Right cardiac atrium (tissue), 5 donors: ENCODE measurements at regions of chrX and their contacts with region 1.

Region 1: DNA sequence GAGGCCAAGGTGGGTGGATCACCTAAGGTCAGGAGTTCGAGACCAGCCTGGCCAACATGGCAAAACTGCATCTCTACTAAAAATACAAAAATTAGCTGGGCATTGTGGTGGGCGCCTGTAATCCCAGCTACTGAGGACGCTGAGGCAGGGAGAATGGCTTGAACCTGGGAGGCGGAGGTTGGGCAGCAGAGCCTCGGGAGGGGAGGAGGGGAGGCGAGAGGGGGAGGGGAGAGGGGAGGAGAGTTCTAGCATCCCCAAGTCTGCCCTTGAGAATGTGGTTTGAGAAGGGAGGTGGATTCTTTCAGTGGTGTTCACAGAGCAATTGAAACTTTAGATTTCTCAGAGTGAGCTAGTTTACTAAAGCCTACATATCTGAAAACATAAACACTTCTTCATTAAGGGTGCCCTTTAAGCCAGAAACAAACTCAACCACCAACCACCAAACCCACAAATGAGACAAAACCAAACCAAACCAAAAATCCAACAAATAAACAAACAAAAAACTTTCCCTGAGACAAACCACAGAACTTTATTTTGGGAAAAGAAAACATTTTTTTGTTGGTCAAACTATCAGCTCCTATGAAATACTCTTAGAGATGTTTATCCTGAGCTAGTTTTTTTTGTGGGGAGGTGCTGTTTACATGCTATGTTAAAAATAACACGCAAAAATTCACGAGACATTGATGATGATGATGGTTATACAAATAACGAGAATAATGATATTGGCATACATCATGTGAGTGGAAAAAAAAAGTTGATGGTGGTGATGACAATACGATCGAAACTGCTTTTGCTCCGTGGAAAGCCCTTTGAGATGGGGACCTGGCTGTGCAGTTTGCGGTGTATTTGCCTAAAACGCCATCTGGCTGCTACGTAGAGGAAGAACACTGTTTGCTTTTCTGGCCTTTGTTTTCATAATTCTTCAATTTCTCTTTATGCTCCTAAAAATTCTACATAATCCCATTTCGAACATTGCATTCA is 98.2 kb upstream of the PRKX start:
- DNase-seq: peak in 2 of 3 donors; percentile 15 to 46
- ATAC-seq: no peak
- H3K4me3 ChIP-seq: no peak overlapping the region
- H3K27ac ChIP-seq: no peak overlapping the region
- H3K4me1 ChIP-seq: no peaks in the 10 kb centered on the region
- H3K27me3 ChIP-seq: no peaks in the 10 kb centered on the region

Region 2: DNA sequence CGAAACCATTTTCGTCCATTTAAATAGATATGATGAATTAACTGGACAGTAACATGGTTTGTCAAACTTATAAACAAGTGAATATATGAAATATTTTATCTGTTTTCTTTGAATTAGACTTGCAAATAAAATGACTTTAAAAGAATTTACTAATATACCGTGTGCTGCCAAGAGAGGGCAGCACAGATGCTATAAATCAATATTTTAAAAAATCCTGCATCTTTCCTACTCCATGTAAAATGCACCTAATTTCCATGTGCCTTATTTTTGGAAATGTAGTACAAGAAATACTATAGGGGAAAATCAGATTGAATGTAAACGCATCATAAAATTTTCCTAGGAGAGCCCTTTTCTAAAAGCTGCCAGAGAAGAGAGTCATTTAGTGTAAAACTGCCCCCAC is 160.3 kb before region 1 on chrX:
- intact Hi-C with region 1: loop called (anchors 5 to 10 kb)
- DNase-seq: no peak
- ATAC-seq: no peak
- H3K4me3 ChIP-seq: no peak overlapping the region
- H3K27ac ChIP-seq: no peak overlapping the region
- H3K4me1 ChIP-seq: no peaks in the 10 kb centered on the region
- H3K27me3 ChIP-seq: no peaks in the 10 kb centered on the region

Region 3: GRCh38 chrX:3697701-3698279 is 113.8 kb before region 1 on chrX:
- intact Hi-C with region 1: no loop called
- DNase-seq: peak in 2 of 3 donors; percentile 35 to 62
- ATAC-seq: peak; percentile 85 to 88
- H3K4me3 ChIP-seq: no peak overlapping the region
- H3K27ac ChIP-seq: peak overlapping the region; percentile 26
- H3K4me1 ChIP-seq: no peaks in the 10 kb centered on the region
- H3K27me3 ChIP-seq: no peaks in the 10 kb centered on the region